GM10248 (cell line): ENCODE measurements at regions of chr17 and their contacts with region 1.

Region 1: DNA sequence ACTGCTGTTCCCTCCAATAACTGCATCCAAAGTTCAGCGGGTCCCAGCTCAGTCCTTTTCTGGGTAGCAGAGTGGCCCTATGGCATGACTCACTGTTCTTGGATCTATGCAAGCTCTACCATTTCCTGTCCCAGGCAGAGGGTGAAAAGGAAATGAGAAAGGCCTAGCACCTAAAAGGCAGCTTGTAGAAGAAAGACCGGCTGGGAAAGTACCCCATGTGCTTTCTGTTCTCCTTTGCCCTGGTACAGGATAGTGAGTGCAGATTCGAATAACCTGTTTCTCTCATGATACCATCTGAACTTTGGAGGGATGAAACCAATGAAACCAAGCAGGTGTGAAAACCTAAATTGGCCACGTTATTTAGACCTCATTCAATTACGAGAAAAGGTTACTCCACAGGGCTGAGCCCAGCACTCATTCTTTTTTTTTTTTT is 12.7 kb upstream of the HASPIN start:
- DNase-seq: peak; percentile 87
- CTCF ChIP-seq: no peak

Region 2: GRCh38 chr17:3695723-3696411 is 15.1 kb before region 1 on chr17 and contains the start of gene P2RX5:
- CTCF ChIA-PET with region 1: interaction called, 16 read pairs
- POLR2A ChIA-PET with region 1: no interaction called
- DNase-seq: peak; percentile 59
- CTCF ChIP-seq: no peak

Region 3: DNA sequence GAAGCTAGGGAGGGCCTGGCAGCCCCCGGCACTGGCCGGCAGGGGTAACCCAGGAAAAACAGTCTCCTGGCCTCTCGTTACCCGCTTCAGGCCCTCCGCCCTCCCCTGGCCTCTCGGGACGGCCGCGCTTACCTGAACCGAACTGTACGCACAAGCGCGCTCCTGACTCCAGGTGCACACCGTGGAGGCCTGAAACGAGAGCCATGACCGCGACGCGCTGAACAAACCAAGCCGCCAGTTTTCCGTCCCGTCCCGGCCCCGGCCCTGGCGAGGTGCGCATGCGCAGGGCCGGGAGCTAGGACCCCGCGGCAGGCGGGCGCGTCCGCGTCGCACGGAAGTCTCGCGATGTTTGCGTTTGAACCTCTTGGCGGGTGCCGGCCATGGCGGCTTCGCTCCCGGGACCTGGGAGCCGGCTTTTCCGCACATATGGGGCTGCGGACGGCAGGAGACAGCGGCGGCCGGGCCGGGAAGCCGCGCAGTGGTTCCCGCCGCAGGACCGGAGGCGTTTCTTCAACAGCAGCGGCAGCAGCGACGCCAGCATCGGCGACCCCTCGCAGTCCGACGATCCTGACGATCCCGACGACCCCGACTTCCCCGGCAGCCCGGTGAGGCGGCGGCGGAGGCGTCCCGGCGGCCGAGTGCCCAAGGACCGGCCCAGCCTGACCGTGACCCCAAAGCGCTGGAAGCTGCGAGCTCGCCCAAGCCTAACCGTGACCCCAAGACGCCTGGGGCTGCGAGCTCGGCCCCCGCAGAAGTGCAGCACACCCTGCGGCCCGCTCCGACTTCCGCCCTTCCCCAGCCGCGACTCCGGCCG is 12.8 kb after region 1 on chr17 and contains the start of gene HASPIN:
- CTCF ChIA-PET with region 1: interaction called, 15 read pairs
- POLR2A ChIA-PET with region 1: interaction called, 3 read pairs
- DNase-seq: peak; percentile 99
- CTCF ChIP-seq: no peak